Dendritic cell treated with granulocyte-macrophage colony-stimulating factor and Interleukin-4, amounts not matched to agents 40 ng/mL and 50 ng/mL, for 4 days (primary cell): ENCODE measurements at regions of chr14 and their contacts with region 1.

Region 1: DNA sequence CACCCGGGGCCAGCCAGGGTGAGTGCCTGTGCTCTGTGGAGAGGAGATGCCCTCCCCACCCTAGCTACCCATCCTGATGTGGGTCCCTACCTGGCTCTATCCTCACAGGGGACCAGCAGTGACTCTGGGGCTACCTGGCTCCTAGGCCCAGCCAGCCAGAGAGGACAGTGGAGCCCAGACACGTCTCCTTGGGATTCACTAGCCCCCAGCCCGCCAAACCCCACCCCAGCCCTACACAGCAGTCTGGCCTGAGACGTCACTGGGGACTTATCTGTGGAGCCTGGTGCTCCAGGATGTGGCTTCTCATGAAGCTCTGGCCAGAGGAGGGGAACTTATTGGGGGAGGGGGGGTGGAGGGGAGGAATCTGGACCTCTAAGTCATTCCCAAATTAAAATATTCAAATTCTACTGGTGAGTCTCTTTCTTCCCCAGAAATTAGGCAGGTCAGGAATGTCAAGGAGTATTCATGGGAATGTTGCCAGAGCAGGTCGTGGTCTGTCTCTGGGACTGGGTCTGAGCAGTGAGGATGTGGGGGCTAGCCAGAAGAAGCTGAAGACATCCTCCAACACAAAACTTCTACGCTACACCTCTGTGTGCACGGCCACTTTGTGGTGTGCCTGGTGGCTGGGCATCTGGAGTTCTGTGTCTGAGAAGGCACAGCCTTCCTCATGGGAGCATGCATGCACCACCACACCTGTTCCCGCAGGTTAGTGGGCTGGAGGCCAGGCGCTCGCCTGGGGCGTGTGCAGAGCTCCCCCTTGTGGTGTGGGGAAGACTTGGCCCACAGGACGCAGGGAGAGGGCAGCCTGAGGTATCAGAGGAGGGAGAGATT is 2.7 kb downstream of the CMTM5 start:
- H3K4me3 Mint-ChIP-seq: no peak overlapping the region
- H3K27ac Mint-ChIP-seq: no peak overlapping the region
- H3K4me1 Mint-ChIP-seq: no peaks in the 10 kb centered on the region
- H3K27me3 Mint-ChIP-seq: peaks cover 11% of the 10 kb centered on the region

Region 2: GRCh38 chr14:23259426-23259825 is 120.2 kb before region 1 on chr14:
- intact Hi-C with region 1: loop called (anchors 2 kb)
- H3K4me3 Mint-ChIP-seq: no peak overlapping the region
- H3K27ac Mint-ChIP-seq: no peak overlapping the region
- H3K4me1 Mint-ChIP-seq: peaks cover 10% of the 10 kb centered on the region
- H3K27me3 Mint-ChIP-seq: peaks cover 14% of the 10 kb centered on the region

Region 3: DNA sequence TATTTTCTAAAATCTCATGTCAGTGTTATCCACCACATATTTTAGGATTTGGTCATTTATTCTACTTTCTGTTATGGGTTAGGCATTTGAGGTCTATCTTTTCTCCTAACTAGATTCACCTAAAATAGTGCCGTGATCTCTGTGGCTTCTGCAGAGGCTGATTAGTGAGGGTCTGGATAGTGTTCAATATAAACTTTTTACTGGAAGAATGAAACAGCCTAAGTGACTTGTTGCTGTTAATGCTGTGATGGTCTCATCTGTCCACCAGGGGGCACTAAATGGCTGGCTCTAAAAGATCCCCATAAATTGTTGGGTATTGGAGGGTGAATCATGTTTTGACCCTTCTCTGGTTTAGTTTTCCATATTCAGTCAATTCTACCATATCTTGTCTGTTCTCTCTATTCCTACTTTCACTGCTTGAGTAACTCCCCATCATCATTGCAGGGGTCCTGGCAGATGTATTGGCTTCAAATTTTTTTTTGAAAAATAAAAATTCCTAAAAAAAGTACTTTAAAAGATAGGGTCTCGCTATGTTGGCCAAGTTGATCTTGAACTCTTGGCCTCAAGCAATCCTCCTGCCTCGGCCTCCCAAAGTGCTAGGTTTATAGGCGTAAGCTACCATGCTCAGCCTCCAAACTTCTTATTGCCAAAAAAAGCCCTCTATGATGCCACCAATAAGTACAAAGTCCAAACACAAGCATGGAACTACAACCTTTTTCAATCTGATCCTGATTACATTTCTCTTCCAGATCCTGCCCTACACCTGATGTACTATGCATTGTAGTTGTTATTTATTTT is 51.4 kb before region 1 on chr14:
- intact Hi-C with region 1: loop called (anchors 2 kb)
- H3K4me3 Mint-ChIP-seq: no peak overlapping the region
- H3K27ac Mint-ChIP-seq: no peak overlapping the region
- H3K4me1 Mint-ChIP-seq: peaks cover 20% of the 10 kb centered on the region
- H3K27me3 Mint-ChIP-seq: peaks cover 3% of the 10 kb centered on the region

Region 4: DNA sequence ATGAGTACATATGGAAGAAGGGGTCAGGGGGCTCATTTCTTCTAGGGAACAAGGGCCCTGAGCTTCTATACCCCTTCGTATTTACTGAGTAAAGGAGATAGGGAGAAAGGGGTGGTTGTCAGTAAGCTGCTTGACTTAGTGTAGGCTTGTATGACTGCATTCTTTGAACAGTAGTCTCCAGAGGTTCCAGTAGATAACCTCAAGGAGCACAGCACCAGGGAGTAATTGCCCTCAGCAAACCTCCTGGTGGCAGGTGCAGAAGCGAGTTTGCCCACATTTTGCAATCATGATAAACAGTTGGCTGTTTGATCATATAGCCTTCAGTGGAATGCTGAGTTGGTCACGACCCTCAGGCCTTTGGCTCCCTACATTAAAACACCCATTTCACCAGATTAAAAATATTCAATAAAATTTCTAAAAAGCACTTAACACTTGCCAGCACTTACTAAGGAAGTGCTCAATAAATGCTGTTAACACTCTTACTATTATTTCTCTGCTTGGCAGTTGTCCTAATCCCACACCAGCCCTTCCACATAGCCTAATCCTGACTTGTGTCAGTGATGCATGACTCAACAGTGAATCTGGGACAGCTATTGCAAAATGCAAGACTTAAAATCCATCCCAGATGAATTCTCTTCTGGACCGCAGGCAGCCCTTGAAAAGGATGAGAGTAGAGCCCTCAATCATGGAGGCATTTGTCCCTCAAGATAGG is 605.5 kb after region 1 on chr14:
- intact Hi-C with region 1: no loop called
- H3K4me3 Mint-ChIP-seq: no peak overlapping the region
- H3K27ac Mint-ChIP-seq: peak overlapping the region; percentile 95
- H3K4me1 Mint-ChIP-seq: peaks cover 83% of the 10 kb centered on the region
- H3K27me3 Mint-ChIP-seq: no peaks in the 10 kb centered on the region